ENCODE measurements at regions of chr17 and their contacts with region 1.

Region 1: GRCh38 chr17:752002-752619 is at the start of gene GEMIN4:
- DNase-seq: peak; percentile 94 to 100 (median 98)
- ATAC-seq: peak; percentile 89
- H3K4me3 ChIP-seq: peak within 1 kb of the TSS; percentile 77 to 94
- H3K4me3 Mint-ChIP-seq: peak within 1 kb of the TSS; percentile 96
- H3K27ac ChIP-seq: peak within 1 kb of the TSS; percentile 60 to 65
- H3K27ac Mint-ChIP-seq: peak within 1 kb of the TSS; percentile 97
- H3K4me1 ChIP-seq: peaks cover 28% of the 10 kb centered on the region
- H3K4me1 Mint-ChIP-seq: peaks cover 41% of the 10 kb centered on the region
- H3K27me3 ChIP-seq: no peaks in the 10 kb centered on the region
- H3K27me3 Mint-ChIP-seq: no peaks in the 10 kb centered on the region
- CTCF ChIP-seq: peak; percentile 86
- total RNA-seq, gene GEMIN4: 19.1 to 19.2 TPM

Region 2: DNA sequence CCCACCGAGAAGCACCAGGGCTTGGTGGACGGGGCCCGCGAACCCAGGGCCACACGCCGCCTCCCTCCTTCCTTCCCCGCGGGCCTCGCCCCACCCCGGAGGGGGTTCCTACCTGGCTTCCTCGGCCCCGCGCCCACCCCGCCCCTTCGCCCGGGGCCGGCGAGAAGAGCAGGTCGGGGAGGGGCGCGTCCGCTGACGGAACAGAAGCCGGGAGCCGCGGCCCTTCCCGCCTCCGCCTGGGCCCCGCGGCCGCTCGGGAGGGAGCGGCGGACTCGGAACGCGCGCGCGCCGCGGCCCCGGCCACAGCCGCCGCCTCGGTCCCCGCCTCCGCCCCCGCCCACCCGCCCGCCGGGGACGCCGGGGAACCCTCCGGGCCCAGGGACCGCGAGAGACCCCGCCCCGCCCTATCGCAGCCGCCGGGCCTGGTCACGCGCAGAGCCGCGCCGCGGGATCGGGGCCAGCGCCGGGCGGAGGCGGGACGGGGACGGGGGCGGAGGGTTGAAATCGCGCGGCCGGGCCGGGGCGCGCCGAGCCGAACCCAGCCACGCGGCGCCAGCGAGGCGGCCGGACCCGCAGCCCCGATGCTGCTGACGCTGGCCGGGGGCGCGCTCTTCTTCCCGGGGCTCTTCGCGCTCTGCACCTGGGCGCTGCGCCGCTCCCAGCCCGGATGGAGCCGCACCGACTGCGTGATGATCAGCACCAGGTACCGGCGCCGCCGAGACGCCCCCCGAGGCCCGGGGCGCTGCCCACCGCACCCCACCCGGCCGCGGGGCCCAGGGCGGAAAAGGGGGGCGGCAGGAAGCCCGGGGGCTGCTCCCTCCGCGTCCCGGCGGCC is 19.8 kb before region 1 on chr17 and contains the start of gene TLCD3A:
- CTCF ChIA-PET with region 1: interaction called, 3 read pairs
- POLR2A ChIA-PET with region 1: no interaction called
- intact Hi-C with region 1: loop called (anchors 1 to 2 kb)
- DNase-seq: peak in 7 of 9 experiments; percentile 35 to 73 (median 61)
- ATAC-seq: peak; percentile 73
- H3K4me3 ChIP-seq: peak within 1 kb of the TSS; percentile 52
- H3K4me3 Mint-ChIP-seq: peak within 1 kb of the TSS; percentile 87
- H3K27ac ChIP-seq: no peak within 1 kb of the TSS
- H3K27ac Mint-ChIP-seq: peak within 1 kb of the TSS; percentile 57
- H3K4me1 ChIP-seq: peaks cover 7% of the 10 kb centered on the region
- H3K4me1 Mint-ChIP-seq: peaks cover 11% of the 10 kb centered on the region
- H3K27me3 ChIP-seq: no peaks in the 10 kb centered on the region
- H3K27me3 Mint-ChIP-seq: no peaks in the 10 kb centered on the region
- CTCF ChIP-seq: no peak
- total RNA-seq, gene TLCD3A: 1.5 to 3.2 TPM

Region 3: DNA sequence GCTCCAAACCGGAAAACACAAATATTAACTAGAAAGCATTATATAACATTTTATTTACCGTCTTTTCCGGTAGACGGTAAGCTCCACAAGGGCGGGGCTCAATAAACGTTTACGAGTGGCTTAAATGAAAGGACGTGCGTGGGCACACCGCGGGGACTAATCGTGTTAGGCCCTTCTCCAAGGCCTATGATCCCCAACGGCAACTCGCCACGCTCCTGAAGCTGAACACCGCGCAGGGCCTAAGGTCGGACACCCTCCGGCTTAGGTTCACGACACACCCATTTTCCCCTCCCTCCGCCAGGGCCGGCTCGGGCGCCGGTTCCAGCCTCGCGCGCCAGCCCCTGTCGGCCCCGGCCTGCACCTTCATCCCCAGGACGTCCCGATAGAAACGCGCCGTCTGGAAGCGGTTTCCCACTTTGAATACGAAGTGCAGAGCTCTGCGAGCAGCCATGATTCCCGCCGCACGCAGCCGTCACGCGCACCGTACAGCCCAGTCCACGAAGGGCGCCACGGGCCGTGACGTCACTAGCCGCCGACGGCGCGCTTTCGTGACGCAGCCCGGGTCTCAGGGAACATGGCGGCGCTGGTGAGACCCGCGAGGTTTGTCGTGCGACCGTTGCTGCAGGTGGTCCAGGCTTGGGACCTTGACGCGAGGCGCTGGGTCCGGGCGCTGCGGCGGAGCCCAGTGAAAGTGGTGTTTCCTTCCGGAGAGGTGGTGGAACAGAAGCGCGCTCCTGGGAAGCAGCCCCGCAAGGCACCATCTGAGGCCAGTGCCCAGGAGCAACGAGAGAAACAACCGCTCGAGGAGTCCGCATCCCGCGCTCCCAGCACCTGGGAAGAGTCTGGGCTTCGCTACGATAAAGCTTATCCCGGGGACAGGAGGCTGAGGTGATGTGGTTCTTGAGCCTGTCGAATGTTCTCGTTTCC is 30.0 kb after region 1 on chr17 and contains the starts of genes GLOD4 and MRM3:
- CTCF ChIA-PET with region 1: no interaction called
- POLR2A ChIA-PET with region 1: interaction called, 19 read pairs
- intact Hi-C with region 1: loop called (anchors 1 kb)
- DNase-seq: peak; percentile 91 to 99 (median 95)
- ATAC-seq: peak; percentile 94
- H3K4me3 ChIP-seq: peak within 1 kb of the TSS; percentile 92 to 100
- H3K4me3 Mint-ChIP-seq: peak within 1 kb of the TSS; percentile 97
- H3K27ac ChIP-seq: peak within 1 kb of the TSS; percentile 94 to 97
- H3K27ac Mint-ChIP-seq: peak within 1 kb of the TSS; percentile 97
- H3K4me1 ChIP-seq: peaks cover 28% of the 10 kb centered on the region
- H3K4me1 Mint-ChIP-seq: peaks cover 34% of the 10 kb centered on the region
- H3K27me3 ChIP-seq: no peaks in the 10 kb centered on the region
- H3K27me3 Mint-ChIP-seq: no peaks in the 10 kb centered on the region
- CTCF ChIP-seq: no peak
- total RNA-seq, gene GLOD4: 80.7 to 86.2 TPM
- total RNA-seq, gene MRM3: 47.4 to 49.7 TPM

Region 4: DNA sequence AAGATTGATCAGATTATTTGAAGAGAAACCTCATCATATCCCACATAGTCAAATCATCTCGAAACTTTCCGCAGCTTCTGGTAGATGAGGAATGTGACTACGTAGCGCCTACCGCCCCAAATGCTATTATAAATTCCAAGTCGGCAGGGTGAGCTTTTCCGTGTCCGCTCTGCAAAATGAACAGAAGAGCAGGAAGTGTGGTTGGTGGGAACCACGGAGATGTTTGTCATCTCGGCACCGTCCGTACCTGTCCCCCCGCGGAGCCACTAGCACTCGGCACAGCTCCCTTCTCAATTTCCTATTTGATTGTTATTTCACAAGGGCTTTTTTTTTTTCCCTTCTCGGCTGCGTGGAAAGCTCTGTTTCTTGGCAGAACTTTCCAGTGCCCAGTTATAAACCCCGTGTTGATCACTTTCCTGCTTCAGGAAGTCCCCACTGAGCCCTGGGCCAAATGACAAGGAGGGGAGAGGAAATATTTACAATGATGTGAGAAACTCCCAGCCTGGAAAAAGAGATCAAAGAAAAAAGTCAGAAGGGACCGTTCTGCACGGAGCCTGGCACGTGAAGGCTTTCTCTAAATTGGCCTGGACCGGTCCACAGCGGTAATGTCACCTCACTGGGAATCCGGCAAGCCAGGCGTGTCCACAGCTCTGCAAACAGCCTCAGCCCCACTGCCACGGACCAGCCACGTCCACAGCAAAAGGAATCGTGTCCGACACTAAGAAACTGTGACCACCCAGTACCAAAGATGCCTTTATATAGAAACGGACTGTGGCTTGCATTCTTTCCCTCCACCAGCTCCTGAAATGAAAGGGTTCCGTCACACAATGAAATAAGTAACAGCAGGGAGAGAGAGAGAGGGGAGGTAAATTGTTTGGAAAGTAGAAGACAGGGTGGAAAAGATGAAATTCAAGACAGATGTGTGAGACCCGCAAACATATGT is 95.1 kb after region 1 on chr17:
- CTCF ChIA-PET with region 1: no interaction called
- POLR2A ChIA-PET with region 1: no interaction called
- intact Hi-C with region 1: no loop called
- DNase-seq: no peak
- ATAC-seq: no peak
- H3K4me3 ChIP-seq: no peak overlapping the region
- H3K4me3 Mint-ChIP-seq: peak overlapping the region; percentile 27
- H3K27ac ChIP-seq: no peak overlapping the region
- H3K27ac Mint-ChIP-seq: no peak overlapping the region
- H3K4me1 ChIP-seq: no peaks in the 10 kb centered on the region
- H3K4me1 Mint-ChIP-seq: peaks cover 8% of the 10 kb centered on the region
- H3K27me3 ChIP-seq: no peaks in the 10 kb centered on the region
- H3K27me3 Mint-ChIP-seq: peaks cover 34% of the 10 kb centered on the region
- CTCF ChIP-seq: no peak

Measured in CD8-positive, alpha-beta T cell (primary cell).